ENCODE measurements at regions of chr1 and their contacts with region 1.

Region 1: GRCh38 chr1:12448746-12449177 is 169.2 kb downstream of the DHRS3 start:
- DNase-seq: no peak
- ATAC-seq: no peak
- H3K4me3 ChIP-seq: peak overlapping the region in 1 of 2 experiments; percentile 0
- H3K4me3 Mint-ChIP-seq: peak overlapping the region; percentile 73
- H3K27ac ChIP-seq: peak overlapping the region; percentile 26 to 56
- H3K27ac Mint-ChIP-seq: peak overlapping the region; percentile 96
- H3K4me1 ChIP-seq: peaks cover 71% of the 10 kb centered on the region
- H3K4me1 Mint-ChIP-seq: peaks cover 76% of the 10 kb centered on the region
- H3K27me3 ChIP-seq: no peaks in the 10 kb centered on the region
- H3K27me3 Mint-ChIP-seq: no peaks in the 10 kb centered on the region
- CTCF ChIP-seq: no peak

Region 2: DNA sequence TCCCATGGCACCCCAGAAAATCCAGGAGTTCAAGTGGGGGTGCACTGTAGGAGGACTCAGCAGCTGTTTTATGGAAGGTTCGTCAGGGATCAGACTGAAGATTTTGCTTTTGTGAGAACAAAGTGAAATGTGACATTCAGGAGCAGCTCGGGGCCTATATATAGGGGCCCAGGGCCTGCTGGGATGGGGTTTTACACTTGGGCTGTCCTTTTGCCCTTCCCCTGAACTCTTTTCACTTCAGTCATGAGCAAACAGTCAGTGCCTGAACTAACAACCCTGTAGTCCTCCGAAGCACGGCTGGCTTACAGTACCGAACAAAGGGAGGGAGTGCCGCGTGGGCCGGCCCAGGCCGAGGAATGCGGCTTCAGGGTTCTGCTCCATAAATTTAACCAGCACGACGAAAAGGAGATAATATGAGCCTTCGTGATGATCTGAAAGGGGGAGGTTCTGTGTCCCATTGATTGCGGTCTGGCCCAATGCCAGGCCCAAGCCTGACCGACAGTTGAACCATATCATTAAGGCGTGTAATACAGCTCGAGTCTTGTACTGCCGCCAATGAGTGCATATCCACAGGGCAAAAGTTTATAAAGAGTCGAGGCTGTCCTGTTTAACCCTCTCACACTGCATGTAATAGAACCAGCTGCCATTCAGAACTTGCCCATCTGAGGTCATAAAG is 29.3 kb after region 1 on chr1:
- CTCF ChIA-PET with region 1: interaction called, 12 read pairs
- POLR2A ChIA-PET with region 1: interaction called, 5 read pairs
- intact Hi-C with region 1: loop called (anchors 1 to 2 kb)
- DNase-seq: peak in 2 of 9 experiments; percentile 40 to 54
- ATAC-seq: peak; percentile 19
- H3K4me3 ChIP-seq: no peak overlapping the region
- H3K4me3 Mint-ChIP-seq: peak overlapping the region; percentile 72
- H3K27ac ChIP-seq: peak overlapping the region; percentile 6 to 63
- H3K27ac Mint-ChIP-seq: peak overlapping the region; percentile 97
- H3K4me1 ChIP-seq: peaks cover 90% of the 10 kb centered on the region
- H3K4me1 Mint-ChIP-seq: peaks cover 90% of the 10 kb centered on the region
- H3K27me3 ChIP-seq: no peaks in the 10 kb centered on the region
- H3K27me3 Mint-ChIP-seq: no peaks in the 10 kb centered on the region
- CTCF ChIP-seq: no peak

Region 3: GRCh38 chr1:12511516-12512468 is 63.0 kb after region 1 on chr1:
- CTCF ChIA-PET with region 1: interaction called, 6 read pairs
- POLR2A ChIA-PET with region 1: interaction called, 8 read pairs
- intact Hi-C with region 1: loop called in 1 of 2 experiments (anchors 2 kb)
- DNase-seq: no peak
- ATAC-seq: no peak
- H3K4me3 ChIP-seq: peak overlapping the region in 1 of 2 experiments; percentile 20
- H3K4me3 Mint-ChIP-seq: peak overlapping the region; percentile 75
- H3K27ac ChIP-seq: peak overlapping the region; percentile 64 to 77
- H3K27ac Mint-ChIP-seq: peak overlapping the region; percentile 98
- H3K4me1 ChIP-seq: peaks cover 34% of the 10 kb centered on the region
- H3K4me1 Mint-ChIP-seq: peaks cover 52% of the 10 kb centered on the region
- H3K27me3 ChIP-seq: no peaks in the 10 kb centered on the region
- H3K27me3 Mint-ChIP-seq: no peaks in the 10 kb centered on the region
- CTCF ChIP-seq: no peak